Kidney (tissue), 22 donors: ENCODE measurements at regions of chr20 and their contacts with region 1.

Region 1: DNA sequence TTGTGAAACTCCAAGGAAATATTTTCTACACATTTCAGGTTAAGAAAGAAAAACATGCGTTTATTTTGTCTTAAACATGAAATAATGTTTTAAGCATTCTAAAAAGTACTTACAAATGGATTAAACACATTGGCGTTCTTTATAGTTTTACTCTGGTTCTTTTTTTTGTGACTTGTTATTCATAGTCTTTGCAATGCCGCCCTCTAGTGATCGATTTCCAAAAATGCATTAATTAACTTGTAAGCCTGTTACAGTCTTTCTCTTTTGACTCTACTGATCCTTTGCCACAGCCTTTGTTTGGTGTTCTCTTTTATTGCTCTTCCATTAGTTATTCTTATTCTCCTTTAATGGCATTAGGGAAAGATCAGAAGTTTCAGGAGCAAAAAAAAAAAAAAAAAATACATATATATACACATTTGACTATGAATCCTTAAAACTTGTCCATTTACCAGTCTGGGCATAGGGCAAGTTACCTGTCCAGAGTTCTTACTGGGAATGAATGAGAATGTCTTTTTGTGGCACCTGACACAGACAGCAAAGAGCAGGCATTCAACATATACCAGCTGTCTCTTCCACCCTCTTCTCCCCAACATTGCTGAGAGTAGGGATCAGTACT is 59.9 kb downstream of the MACROD2 start:
- DNase-seq: peak in 2 of 5 donors; percentile 79 to 91
- H3K4me3 ChIP-seq: no peak overlapping the region
- H3K27ac ChIP-seq: no peak overlapping the region
- H3K4me1 ChIP-seq: no peaks in the 10 kb centered on the region
- H3K27me3 ChIP-seq: no peaks in the 10 kb centered on the region
- CTCF ChIP-seq: peak; percentile 52

Region 2: DNA sequence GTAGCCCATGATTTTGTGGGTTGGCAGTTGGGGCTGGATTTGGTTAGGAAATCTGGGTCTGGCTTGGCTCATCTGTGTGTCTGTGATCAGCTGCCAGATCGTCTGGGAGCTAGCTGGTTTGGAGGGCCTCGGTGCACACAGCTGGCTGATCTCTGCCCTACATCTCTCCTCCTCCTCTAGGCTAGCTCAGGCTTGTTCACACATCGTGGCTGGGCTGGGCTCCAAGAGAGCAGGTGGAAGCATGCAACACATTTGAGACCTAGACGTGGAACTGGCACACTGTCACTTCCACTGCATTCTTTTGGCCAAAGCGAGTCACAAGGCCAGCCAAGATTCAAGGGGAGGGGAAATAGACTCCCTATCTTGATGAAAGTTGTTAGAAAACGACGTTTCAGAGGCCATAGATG is 254.5 kb before region 1 on chr20:
- intact Hi-C with region 1: no loop called
- DNase-seq: peak in 4 of 5 donors; percentile 16 to 88 (median 47)
- H3K4me3 ChIP-seq: no peak overlapping the region
- H3K27ac ChIP-seq: no peak overlapping the region
- H3K4me1 ChIP-seq: peaks cover 0 to 6% (median 0%) of the 10 kb centered on the region in 3 donors
- H3K27me3 ChIP-seq: no peaks in the 10 kb centered on the region
- CTCF ChIP-seq: no peak

Region 3: DNA sequence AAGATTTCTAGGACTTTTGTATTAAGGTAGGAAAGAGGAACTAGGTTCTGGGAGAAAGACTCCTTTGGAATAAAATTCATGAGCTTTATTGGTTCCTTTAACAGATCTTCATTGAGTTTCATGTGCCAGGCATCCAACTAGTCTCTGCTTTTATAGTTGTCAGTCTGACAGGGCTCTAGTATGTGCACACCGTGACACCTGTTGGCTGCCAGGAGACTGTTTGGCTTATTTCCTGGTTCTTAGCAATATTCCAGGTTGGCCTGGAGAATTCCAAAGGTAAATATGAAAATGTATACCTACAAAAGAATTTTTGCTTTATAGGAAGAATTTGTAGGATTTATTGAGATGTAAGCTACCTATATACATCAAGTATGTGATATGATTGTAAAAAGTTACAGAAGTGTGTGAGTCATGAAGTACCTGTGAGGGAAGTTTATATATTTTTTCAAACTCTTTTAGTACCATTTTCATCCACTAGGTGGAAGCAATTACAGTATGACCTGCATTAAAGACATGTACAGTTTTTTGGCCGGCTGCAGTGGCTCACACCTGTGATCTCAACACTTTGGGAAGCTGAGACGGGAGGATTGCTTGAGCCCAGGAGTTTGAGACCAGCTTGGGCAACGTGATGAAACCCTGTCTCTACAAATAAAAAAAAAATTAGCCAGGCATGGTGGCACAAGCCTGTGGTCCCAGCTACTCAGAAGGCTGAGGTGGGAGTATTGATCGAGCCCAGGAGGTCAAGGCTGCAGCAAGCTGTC is 235.2 kb before region 1 on chr20:
- intact Hi-C with region 1: loop called (anchors 10 kb)
- DNase-seq: peak in 4 of 5 donors; percentile 50 to 77 (median 62)
- H3K4me3 ChIP-seq: no peak overlapping the region
- H3K27ac ChIP-seq: no peak overlapping the region
- H3K4me1 ChIP-seq: peaks cover 0 to 1% (median 0%) of the 10 kb centered on the region in 3 donors
- H3K27me3 ChIP-seq: no peaks in the 10 kb centered on the region
- CTCF ChIP-seq: peak; percentile 64